ENCODE measurements at regions of chr4 and their contacts with region 1.

Region 1: DNA sequence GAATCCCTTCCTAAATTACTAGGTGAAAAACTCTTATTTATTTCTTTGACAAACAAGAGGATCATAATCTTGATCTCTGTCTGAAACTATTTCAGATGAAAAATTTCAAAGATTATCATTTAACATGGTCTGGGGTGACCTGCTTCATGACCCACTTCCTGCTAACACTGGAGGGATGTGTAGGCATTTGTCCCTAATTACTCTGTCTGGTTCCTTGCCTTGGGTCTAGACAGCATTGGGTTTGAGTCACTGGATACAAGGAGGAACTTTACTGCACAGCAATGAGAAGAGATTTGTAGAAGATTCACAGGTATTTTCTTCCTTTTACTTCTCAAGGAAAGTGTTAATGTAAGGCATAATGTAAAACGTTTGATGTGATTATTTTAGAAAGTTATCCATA is 67.9 kb downstream of the LEF1 start:
- DNase-seq: peak in 1 of 14 experiments; percentile 22
- ATAC-seq: peak; percentile 58
- H3K4me3 ChIP-seq: no peak overlapping the region
- H3K4me3 Mint-ChIP-seq: peak overlapping the region; percentile 69
- H3K27ac ChIP-seq: peak overlapping the region; percentile 5 to 54
- H3K27ac Mint-ChIP-seq: peak overlapping the region; percentile 92
- H3K4me1 ChIP-seq: peaks cover 34% of the 10 kb centered on the region
- H3K4me1 Mint-ChIP-seq: peaks cover 93% of the 10 kb centered on the region
- H3K27me3 ChIP-seq: no peaks in the 10 kb centered on the region
- H3K27me3 Mint-ChIP-seq: no peaks in the 10 kb centered on the region
- CTCF ChIP-seq: no peak

Region 2: DNA sequence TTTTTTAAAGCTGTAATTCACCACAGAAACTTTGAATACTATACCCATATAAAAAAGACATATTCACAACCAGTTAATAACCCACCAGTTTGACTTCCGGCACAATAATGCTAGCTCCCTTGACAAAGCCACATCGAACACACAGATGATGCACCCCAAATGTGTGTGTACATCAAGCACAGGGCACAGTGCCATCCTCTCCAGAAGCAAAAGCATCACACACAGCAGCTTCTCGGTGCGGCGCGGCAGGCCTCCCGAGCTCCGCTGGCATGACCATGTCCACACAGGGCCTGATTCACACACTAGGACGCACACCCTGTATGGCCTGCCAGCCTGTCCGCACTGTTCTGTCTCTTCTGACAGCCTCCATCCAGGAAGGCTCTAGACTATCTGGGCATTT is 20.1 kb before region 1 on chr4:
- CTCF ChIA-PET with region 1: interaction called, 3 read pairs
- POLR2A ChIA-PET with region 1: interaction called, 29 read pairs
- intact Hi-C with region 1: loop called in 1 of 2 experiments (anchors 2 kb)
- DNase-seq: peak; percentile 35 to 77 (median 62)
- ATAC-seq: peak; percentile 84
- H3K4me3 ChIP-seq: no peak overlapping the region
- H3K4me3 Mint-ChIP-seq: peak overlapping the region; percentile 77
- H3K27ac ChIP-seq: peak overlapping the region in 1 of 2 donors; percentile 68
- H3K27ac Mint-ChIP-seq: peak overlapping the region; percentile 95
- H3K4me1 ChIP-seq: peaks cover 14% of the 10 kb centered on the region
- H3K4me1 Mint-ChIP-seq: peaks cover 78% of the 10 kb centered on the region
- H3K27me3 ChIP-seq: no peaks in the 10 kb centered on the region
- H3K27me3 Mint-ChIP-seq: no peaks in the 10 kb centered on the region
- CTCF ChIP-seq: no peak

Region 3: GRCh38 chr4:108087293-108087967 is 13.4 kb before region 1 on chr4:
- CTCF ChIA-PET with region 1: interaction called, 3 read pairs
- POLR2A ChIA-PET with region 1: interaction called, 5 read pairs
- intact Hi-C with region 1: loop called (anchors 2 kb)
- DNase-seq: no peak
- ATAC-seq: no peak
- H3K4me3 ChIP-seq: no peak overlapping the region
- H3K4me3 Mint-ChIP-seq: peak overlapping the region; percentile 14
- H3K27ac ChIP-seq: peak overlapping the region; percentile 13 to 33
- H3K27ac Mint-ChIP-seq: peak overlapping the region; percentile 95
- H3K4me1 ChIP-seq: peaks cover 13% of the 10 kb centered on the region
- H3K4me1 Mint-ChIP-seq: peaks cover 89% of the 10 kb centered on the region
- H3K27me3 ChIP-seq: no peaks in the 10 kb centered on the region
- H3K27me3 Mint-ChIP-seq: no peaks in the 10 kb centered on the region
- CTCF ChIP-seq: no peak

Region 4: GRCh38 chr4:108240366-108240765 is 139.5 kb after region 1 on chr4:
- CTCF ChIA-PET with region 1: no interaction called
- POLR2A ChIA-PET with region 1: no interaction called
- intact Hi-C with region 1: no loop called
- DNase-seq: no peak
- ATAC-seq: no peak
- H3K4me3 ChIP-seq: no peak overlapping the region
- H3K4me3 Mint-ChIP-seq: no peak overlapping the region
- H3K27ac ChIP-seq: no peak overlapping the region
- H3K27ac Mint-ChIP-seq: no peak overlapping the region
- H3K4me1 ChIP-seq: peaks cover 5% of the 10 kb centered on the region
- H3K4me1 Mint-ChIP-seq: peaks cover 26% of the 10 kb centered on the region
- H3K27me3 ChIP-seq: no peaks in the 10 kb centered on the region
- H3K27me3 Mint-ChIP-seq: no peaks in the 10 kb centered on the region
- CTCF ChIP-seq: no peak